ENCODE measurements at regions of chr4 and their contacts with region 1.

Region 1: GRCh38 chr4:174135936-174136406 is 147.5 kb downstream of the FBXO8 start:
- DNase-seq: peak; percentile 57
- H3K4me3 ChIP-seq: peak overlapping the region; percentile 42 to 55
- H3K27ac ChIP-seq: peak overlapping the region; percentile 56 to 100; a peak in 3 of 4 replicates
- H3K4me1 ChIP-seq: peaks cover 10 to 38% of the 10 kb centered on the region in 2 experiments; a peak in 3 of 4 replicates
- H3K27me3 ChIP-seq: no peaks in the 10 kb centered on the region
- CTCF ChIP-seq: no peak
- EP300 ChIP-seq: peak in 1 of 2 experiments; percentile 92; a peak in 2 of 4 replicates
- RAD21 ChIP-seq: 0 out of 2 replicates have a peak, but pooled peaks have one; percentile 6

Region 2: GRCh38 chr4:173522123-173522950 is 613.6 kb before region 1 on chr4:
- CTCF ChIA-PET with region 1: no interaction called
- POLR2A ChIA-PET with region 1: interaction called, 20 read pairs
- DNase-seq: peak; percentile 73
- H3K4me3 ChIP-seq: peak overlapping the region; percentile 61 to 92
- H3K27ac ChIP-seq: peak overlapping the region; percentile 99
- H3K4me1 ChIP-seq: peaks cover 23 to 30% of the 10 kb centered on the region in 2 experiments
- H3K27me3 ChIP-seq: no peaks in the 10 kb centered on the region
- CTCF ChIP-seq: peak; percentile 22
- EP300 ChIP-seq: peak in 1 of 2 experiments; percentile 82; a peak in 2 of 4 replicates
- RAD21 ChIP-seq: no peak

Region 3: GRCh38 chr4:174120446-174121295 is 15.3 kb before region 1 on chr4:
- CTCF ChIA-PET with region 1: interaction called, 22 read pairs
- POLR2A ChIA-PET with region 1: interaction called, 27 read pairs
- DNase-seq: peak; percentile 69
- H3K4me3 ChIP-seq: peak overlapping the region; percentile 40 to 59
- H3K27ac ChIP-seq: peak overlapping the region; percentile 49 to 100; a peak in 3 of 4 replicates
- H3K4me1 ChIP-seq: peaks cover 4 to 11% of the 10 kb centered on the region in 2 experiments; a peak in 2 of 4 replicates
- H3K27me3 ChIP-seq: no peaks in the 10 kb centered on the region
- CTCF ChIP-seq: peak; percentile 72
- EP300 ChIP-seq: peak; percentile 5 to 67; a peak in 1 of 4 replicates
- RAD21 ChIP-seq: peak; percentile 79

Region 4: DNA sequence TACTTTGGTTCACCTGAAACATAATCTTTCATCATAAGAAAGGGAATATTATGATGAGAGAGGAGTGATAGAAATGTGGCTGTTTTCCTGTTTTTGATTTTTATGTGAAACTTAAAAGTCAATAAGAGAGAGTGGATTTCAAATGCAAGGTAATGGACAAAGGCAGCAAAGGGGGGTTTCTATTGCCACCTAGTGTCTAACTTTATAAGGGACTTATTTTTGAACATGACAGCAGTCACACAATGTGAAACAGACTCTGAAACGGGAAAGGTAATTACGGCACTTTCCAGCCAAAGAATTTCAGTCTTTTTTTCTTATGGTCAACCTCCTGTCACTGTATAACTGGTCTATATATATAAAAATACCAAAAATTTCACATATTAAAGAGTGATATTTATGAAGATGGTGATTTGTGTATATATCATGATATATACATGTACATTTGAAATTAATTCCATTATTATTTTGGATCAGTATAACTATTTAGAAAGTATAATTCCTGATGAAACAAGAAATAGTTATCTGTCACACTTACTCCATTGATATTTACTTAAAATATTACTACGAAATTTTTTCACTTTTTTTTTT is 20.4 kb after region 1 on chr4:
- CTCF ChIA-PET with region 1: interaction called, 9 read pairs
- POLR2A ChIA-PET with region 1: interaction called, 27 read pairs
- DNase-seq: peak; percentile 27
- H3K4me3 ChIP-seq: peak overlapping the region in 1 of 2 experiments; percentile 40; a peak in 1 of 4 replicates
- H3K27ac ChIP-seq: peak overlapping the region; percentile 74 to 100; a peak in 3 of 4 replicates
- H3K4me1 ChIP-seq: peaks cover 40 to 51% of the 10 kb centered on the region in 2 experiments; a peak in 3 of 4 replicates
- H3K27me3 ChIP-seq: no peaks in the 10 kb centered on the region
- CTCF ChIP-seq: peak; percentile 76
- EP300 ChIP-seq: peak in 1 of 2 experiments; percentile 56; a peak in 1 of 4 replicates
- RAD21 ChIP-seq: peak; percentile 94

Region 5: DNA sequence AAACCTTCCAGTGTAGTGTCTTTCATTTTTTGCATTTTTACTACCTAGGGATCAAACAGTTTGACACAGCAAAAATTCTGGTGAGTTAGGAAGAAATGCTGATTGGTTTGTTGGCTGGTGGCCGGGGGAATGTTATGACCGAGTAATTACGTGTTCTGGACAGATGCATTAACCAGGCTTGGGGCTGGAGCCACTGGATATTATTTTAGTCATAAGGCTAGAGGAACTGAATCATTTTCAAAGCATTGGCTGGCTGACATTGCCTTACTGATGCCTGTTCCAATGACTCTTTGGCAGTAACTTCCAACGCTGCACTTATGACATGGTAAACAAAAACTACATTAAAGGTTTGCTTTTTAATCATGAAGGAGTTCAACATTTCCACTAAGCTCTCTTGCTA is 62.9 kb after region 1 on chr4:
- CTCF ChIA-PET with region 1: interaction called, 3 read pairs
- POLR2A ChIA-PET with region 1: interaction called, 14 read pairs
- DNase-seq: peak; percentile 51
- H3K4me3 ChIP-seq: peak overlapping the region; percentile 19 to 42; a peak in 2 of 4 replicates
- H3K27ac ChIP-seq: peak overlapping the region; percentile 83 to 99
- H3K4me1 ChIP-seq: peaks cover 18 to 42% of the 10 kb centered on the region in 2 experiments; a peak in 3 of 4 replicates
- H3K27me3 ChIP-seq: no peaks in the 10 kb centered on the region
- CTCF ChIP-seq: no peak
- EP300 ChIP-seq: peak; percentile 96 to 99
- RAD21 ChIP-seq: 0 out of 2 replicates have a peak, but pooled peaks have one; percentile 20

Region 6: DNA sequence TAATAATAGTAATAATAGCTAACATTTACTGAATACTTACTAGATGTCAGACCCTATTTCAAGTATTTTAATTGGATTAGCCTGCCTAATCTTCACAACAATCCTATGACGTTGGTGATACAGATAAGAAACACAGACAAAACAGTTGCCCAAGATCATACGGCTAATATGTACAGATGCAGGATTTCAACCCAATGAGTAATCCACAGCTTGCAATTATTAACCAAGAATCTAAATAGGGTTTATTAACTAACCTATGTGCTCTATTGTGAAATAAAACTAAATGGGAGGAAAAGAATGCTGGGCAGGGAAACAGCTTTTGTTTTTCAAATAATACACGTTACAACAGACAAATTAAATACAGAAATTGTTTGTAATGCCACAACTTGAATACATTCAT is 124.1 kb after region 1 on chr4:
- CTCF ChIA-PET with region 1: no interaction called
- POLR2A ChIA-PET with region 1: interaction called, 10 read pairs
- DNase-seq: peak; percentile 30
- H3K4me3 ChIP-seq: peak overlapping the region in 1 of 2 experiments; percentile 33; a peak in 2 of 4 replicates
- H3K27ac ChIP-seq: peak overlapping the region; percentile 30 to 98; a peak in 3 of 4 replicates
- H3K4me1 ChIP-seq: peaks cover 32 to 36% of the 10 kb centered on the region in 2 experiments
- H3K27me3 ChIP-seq: no peaks in the 10 kb centered on the region
- CTCF ChIP-seq: no peak
- EP300 ChIP-seq: peak in 1 of 2 experiments; percentile 94; a peak in 3 of 4 replicates
- RAD21 ChIP-seq: no peak

Region 7: DNA sequence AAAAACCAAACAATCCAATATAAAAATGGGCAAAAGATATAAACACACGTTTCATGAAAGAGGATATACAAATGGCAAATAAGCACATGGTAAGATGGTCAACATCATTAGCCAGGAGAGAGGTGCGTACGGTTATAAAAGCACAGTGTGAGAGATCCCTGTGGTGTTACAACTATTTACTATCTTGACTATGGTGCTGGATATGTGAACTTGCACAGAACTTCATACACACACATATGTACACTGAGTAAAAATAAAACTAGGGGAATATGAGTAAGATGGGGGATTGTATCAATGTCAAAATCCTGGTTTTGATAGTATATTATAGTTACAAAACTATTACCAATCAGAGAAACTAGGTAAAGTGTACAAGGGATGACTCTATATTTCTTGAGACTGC is 139.1 kb after region 1 on chr4:
- CTCF ChIA-PET with region 1: no interaction called
- POLR2A ChIA-PET with region 1: no interaction called
- DNase-seq: no peak
- H3K4me3 ChIP-seq: no peak overlapping the region
- H3K27ac ChIP-seq: peak overlapping the region in 1 of 2 experiments; percentile 11; a peak in 1 of 4 replicates
- H3K4me1 ChIP-seq: peaks cover 0 to 2% of the 10 kb centered on the region in 2 experiments; a peak in 2 of 4 replicates
- H3K27me3 ChIP-seq: no peaks in the 10 kb centered on the region
- CTCF ChIP-seq: no peak
- EP300 ChIP-seq: no peak
- RAD21 ChIP-seq: no peak

Region 8: DNA sequence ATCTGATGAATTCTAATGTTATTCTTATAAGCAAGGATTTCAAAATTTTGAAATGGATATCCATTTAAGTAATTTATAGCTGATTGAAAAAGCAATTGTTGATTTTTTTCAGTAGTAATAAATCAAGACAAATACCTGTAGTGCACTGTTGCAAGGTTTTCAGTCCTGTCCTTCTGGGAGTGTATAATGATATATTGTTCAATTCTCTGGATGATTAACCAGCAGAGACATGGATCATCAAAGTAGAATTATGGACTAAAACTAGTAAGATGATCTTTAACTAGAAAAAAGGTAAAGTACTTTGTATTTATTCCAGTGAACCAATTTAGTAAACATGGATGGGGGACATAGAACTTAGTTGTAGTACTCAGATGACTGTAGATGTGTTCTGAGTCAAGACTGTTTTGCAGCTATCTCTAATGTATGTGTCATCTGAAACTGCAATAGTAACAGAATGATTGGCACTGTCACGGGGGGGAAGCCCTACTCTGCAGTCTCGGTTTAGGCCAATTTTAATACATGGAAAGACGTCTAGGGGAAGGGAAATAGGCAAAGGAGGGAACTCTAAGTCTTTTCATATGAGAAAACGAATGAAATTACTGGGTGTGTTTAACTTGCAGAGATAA is 571.2 kb after region 1 on chr4:
- CTCF ChIA-PET with region 1: no interaction called
- POLR2A ChIA-PET with region 1: no interaction called
- DNase-seq: no peak
- H3K4me3 ChIP-seq: no peak overlapping the region
- H3K27ac ChIP-seq: no peak overlapping the region
- H3K4me1 ChIP-seq: no peaks in the 10 kb centered on the region
- H3K27me3 ChIP-seq: no peaks in the 10 kb centered on the region; the same call in 1 of the 2 replicates
- CTCF ChIP-seq: no peak
- EP300 ChIP-seq: no peak
- RAD21 ChIP-seq: no peak